ENCODE measurements at regions of chr10 and their contacts with region 1.

Region 1: DNA sequence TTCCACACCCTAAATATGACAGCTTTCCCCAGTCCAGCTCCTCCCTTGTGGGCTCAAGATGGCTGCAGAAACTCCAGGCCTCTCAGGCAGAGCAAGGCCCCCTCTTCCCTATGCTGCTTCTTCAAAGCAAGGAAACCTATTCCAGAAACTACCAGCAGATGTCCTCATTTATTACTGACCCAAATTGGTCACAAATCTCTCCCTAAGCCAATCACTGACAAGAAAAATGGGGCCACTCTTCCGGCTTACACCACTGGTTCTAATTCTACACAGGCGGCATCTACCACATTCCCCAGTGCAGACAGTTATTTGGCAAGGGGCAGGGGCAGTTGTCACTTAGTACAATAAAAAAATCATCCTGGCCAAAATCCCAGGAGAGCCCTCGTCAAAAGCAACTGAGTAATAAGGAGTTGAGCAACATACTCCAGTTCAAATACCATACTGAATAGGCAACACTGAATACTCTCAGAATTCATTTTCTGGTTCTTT is 150.4 kb downstream of the SFMBT2 start:
- DNase-seq: no peak
- ATAC-seq: peak; percentile 81
- H3K4me3 Mint-ChIP-seq: no peak overlapping the region
- H3K27ac Mint-ChIP-seq: no peak overlapping the region
- H3K4me1 Mint-ChIP-seq: peaks cover 29% of the 10 kb centered on the region
- H3K27me3 Mint-ChIP-seq: no peaks in the 10 kb centered on the region
- CTCF ChIP-seq: peak; percentile 53

Region 2: GRCh38 chr10:6838118-6838517 is 422.3 kb before region 1 on chr10:
- CTCF ChIA-PET with region 1: no interaction called
- POLR2A ChIA-PET with region 1: no interaction called
- intact Hi-C with region 1: loop called (anchors 10 kb)
- DNase-seq: no peak
- ATAC-seq: no peak
- H3K4me3 Mint-ChIP-seq: no peak overlapping the region
- H3K27ac Mint-ChIP-seq: no peak overlapping the region
- H3K4me1 Mint-ChIP-seq: no peaks in the 10 kb centered on the region
- H3K27me3 Mint-ChIP-seq: peaks cover 9% of the 10 kb centered on the region
- CTCF ChIP-seq: no peak

Region 3: GRCh38 chr10:7121154-7121810 is 139.2 kb before region 1 on chr10:
- CTCF ChIA-PET with region 1: interaction called, 9 read pairs
- POLR2A ChIA-PET with region 1: no interaction called
- intact Hi-C with region 1: loop called (anchors 1 kb)
- DNase-seq: peak; percentile 43
- ATAC-seq: peak; percentile 85
- H3K4me3 Mint-ChIP-seq: no peak overlapping the region
- H3K27ac Mint-ChIP-seq: no peak overlapping the region
- H3K4me1 Mint-ChIP-seq: peaks cover 6% of the 10 kb centered on the region
- H3K27me3 Mint-ChIP-seq: peaks cover 3% of the 10 kb centered on the region
- CTCF ChIP-seq: peak; percentile 42

Region 4: DNA sequence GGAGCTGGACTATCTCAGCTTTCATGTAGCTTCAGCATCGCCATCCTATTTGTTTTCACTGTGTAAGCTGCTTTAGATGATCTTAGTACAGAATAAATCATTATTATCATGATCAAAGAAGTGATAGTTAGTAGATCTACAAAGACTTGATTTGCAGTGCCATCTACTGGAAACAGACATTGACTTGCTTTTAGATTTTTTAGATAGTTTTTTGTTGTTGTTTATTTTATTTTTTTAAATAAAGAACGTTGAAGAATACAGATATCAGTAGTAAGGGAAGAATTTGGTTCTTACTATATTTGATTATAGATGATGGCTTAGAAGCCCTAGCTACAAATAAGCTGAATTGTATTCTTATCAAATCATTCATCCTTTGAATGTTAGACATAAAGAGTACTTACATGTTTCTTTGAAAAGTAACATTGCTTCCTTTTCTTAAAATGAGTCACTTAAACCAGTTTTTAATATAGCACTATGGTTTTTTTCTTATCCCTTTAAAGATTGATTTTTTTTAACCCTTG is 156.7 kb after region 1 on chr10:
- CTCF ChIA-PET with region 1: interaction called, 6 read pairs
- POLR2A ChIA-PET with region 1: no interaction called
- intact Hi-C with region 1: loop called (anchors 1 kb)
- DNase-seq: no peak
- ATAC-seq: no peak
- H3K4me3 Mint-ChIP-seq: no peak overlapping the region
- H3K27ac Mint-ChIP-seq: no peak overlapping the region
- H3K4me1 Mint-ChIP-seq: peaks cover 6% of the 10 kb centered on the region
- H3K27me3 Mint-ChIP-seq: peaks cover 5% of the 10 kb centered on the region
- CTCF ChIP-seq: no peak

Region 5: DNA sequence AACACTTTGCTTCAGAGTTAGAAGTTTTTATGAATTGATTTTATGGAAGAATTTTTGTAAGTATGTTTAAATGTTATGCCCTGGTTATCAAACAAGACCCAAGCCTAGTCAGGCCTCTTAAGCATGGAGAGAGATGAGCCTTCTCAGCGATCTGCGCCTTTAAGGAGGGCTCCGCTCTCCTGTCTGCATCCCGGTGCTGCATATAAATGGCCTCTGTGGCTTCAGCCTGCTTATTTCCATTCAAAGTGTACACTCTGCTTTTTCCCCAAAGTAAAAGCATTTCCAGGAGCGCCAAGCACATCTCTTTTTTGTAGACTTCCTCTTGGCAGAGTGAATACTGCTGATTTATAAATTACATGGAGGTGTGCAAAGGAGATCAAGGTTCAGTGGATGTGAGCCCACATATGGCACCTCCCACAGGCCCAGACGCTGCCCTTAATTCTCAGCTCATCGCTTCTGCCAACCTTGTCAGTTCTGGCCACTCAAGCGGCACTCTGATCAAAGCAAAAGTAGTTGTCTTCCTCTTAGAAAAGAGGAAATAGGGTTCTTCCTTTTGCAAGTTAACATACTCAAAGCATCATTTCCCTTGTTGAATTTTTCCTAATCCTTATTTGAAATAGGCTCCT is 220.4 kb after region 1 on chr10:
- CTCF ChIA-PET with region 1: no interaction called
- POLR2A ChIA-PET with region 1: no interaction called
- intact Hi-C with region 1: no loop called
- DNase-seq: peak; percentile 41
- ATAC-seq: peak; percentile 94
- H3K4me3 Mint-ChIP-seq: peak overlapping the region; percentile 70
- H3K27ac Mint-ChIP-seq: peak overlapping the region; percentile 79
- H3K4me1 Mint-ChIP-seq: peaks cover 85% of the 10 kb centered on the region
- H3K27me3 Mint-ChIP-seq: no peaks in the 10 kb centered on the region
- CTCF ChIP-seq: no peak

Region 6: DNA sequence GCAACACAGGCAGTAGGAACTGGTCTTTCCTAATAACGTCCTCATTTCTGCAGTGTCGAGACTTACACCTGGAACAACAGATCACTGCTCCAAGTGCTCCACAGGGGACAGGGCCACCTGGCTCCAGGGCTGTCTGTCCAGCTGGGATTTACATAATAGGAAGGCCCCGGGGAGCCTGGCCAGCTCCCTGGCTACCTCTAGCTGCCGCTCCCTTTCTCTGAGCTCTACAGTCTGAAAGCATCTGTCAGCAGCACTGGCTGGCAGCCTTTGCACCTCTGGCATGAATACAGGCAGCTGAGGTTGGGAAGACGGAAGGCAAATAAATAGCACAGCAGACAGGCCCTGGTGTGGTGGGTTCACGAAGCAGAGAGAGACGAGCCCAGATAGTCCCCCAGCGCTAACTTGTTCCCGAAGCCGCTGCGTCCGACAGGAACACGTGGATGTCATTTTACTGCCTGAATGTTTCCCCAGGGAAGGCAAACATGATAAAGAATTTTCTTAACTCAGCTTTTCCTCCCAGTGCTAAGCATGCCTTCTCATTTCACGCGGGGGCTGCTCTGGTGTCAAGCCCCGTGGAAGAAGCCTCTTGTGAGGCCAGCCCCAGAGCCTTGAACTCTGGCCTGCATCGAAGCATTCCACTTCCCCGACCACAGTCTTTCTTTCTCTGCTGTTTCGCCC is 300.9 kb after region 1 on chr10:
- CTCF ChIA-PET with region 1: no interaction called
- POLR2A ChIA-PET with region 1: no interaction called
- intact Hi-C with region 1: no loop called
- DNase-seq: no peak
- ATAC-seq: no peak
- H3K4me3 Mint-ChIP-seq: no peak overlapping the region
- H3K27ac Mint-ChIP-seq: no peak overlapping the region
- H3K4me1 Mint-ChIP-seq: no peaks in the 10 kb centered on the region
- H3K27me3 Mint-ChIP-seq: peaks cover 2% of the 10 kb centered on the region
- CTCF ChIP-seq: no peak

Region 7: DNA sequence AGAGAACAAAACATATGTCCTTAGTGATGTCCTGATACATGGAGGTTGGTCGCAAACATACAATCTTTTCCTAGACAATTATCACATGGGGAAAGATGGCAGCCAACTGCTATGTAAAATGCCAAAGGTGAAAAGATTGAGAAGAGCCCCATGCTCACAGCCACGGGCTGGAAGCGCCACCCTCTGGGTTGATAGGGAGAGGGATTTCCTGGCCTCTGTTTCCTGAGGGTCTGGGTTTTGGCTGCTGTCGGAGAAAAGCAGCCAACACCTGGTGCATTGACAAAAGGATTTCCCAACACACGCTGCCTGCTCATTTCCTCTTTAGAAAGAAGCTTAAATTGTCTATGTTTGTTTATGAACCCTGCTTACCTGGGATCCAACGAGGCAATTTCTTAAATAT is 362.5 kb after region 1 on chr10:
- CTCF ChIA-PET with region 1: no interaction called
- POLR2A ChIA-PET with region 1: no interaction called
- intact Hi-C with region 1: loop called (anchors 1 kb)
- DNase-seq: no peak
- ATAC-seq: no peak
- H3K4me3 Mint-ChIP-seq: no peak overlapping the region
- H3K27ac Mint-ChIP-seq: no peak overlapping the region
- H3K4me1 Mint-ChIP-seq: peaks cover 5% of the 10 kb centered on the region
- H3K27me3 Mint-ChIP-seq: peaks cover 2% of the 10 kb centered on the region
- CTCF ChIP-seq: no peak

Measured in activated B cell treated with CpG ODN at 0.5 μM for 24 hours (primary cell).